ENCODE measurements at regions of chr1 and their contacts with region 1.

Region 1: DNA sequence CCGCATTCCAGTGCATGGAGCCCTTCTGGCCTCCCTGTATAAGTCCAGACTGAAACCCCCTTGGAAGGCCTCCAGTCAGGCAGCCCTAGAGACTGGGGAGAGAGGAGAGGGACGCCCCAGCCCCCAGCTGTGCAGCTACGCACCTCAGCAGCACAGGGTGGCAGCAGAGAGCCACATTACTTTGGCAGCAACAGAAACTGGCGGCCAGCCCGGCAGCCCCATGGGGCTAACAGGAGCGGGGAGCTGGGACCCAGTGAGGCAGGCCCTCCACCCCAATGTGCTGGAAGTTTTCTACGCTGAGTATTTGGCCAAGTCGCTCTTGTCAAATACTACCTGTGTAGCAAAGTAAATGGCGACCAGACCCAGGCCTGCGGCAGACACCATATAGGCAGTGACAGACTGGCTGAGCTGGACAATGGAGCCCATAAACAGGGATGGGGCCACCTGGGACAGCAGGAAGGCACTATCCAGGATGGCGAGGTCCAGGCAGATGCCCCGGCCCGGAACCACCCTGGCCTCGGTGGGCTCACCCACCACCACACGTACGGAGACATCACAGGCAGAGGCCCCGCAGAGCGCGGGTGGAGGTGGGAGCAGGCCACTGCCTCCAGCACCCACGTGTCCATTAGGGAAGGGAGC is 21.2 kb downstream of the SLC45A3 start:
- DNase-seq: peak; percentile 85
- H3K4me3 Mint-ChIP-seq: no peak overlapping the region
- H3K27ac Mint-ChIP-seq: no peak overlapping the region
- H3K4me1 Mint-ChIP-seq: no peaks in the 10 kb centered on the region
- H3K27me3 Mint-ChIP-seq: peaks cover 2% of the 10 kb centered on the region

Region 2: GRCh38 chr1:205485338-205486228 is 173.5 kb before region 1 on chr1:
- CTCF ChIA-PET with region 1: interaction called, 23 read pairs
- POLR2A ChIA-PET with region 1: no interaction called
- intact Hi-C with region 1: no loop called
- DNase-seq: peak; percentile 75
- H3K4me3 Mint-ChIP-seq: peak overlapping the region; percentile 25
- H3K27ac Mint-ChIP-seq: no peak overlapping the region
- H3K4me1 Mint-ChIP-seq: peaks cover 10% of the 10 kb centered on the region
- H3K27me3 Mint-ChIP-seq: peaks cover 22% of the 10 kb centered on the region

Region 3: GRCh38 chr1:205584732-205585131 is 74.3 kb before region 1 on chr1:
- CTCF ChIA-PET with region 1: interaction called, 631 read pairs
- POLR2A ChIA-PET with region 1: no interaction called
- intact Hi-C with region 1: no loop called
- DNase-seq: no peak
- H3K4me3 Mint-ChIP-seq: no peak overlapping the region
- H3K27ac Mint-ChIP-seq: no peak overlapping the region
- H3K4me1 Mint-ChIP-seq: no peaks in the 10 kb centered on the region
- H3K27me3 Mint-ChIP-seq: peaks cover 4% of the 10 kb centered on the region

Region 4: DNA sequence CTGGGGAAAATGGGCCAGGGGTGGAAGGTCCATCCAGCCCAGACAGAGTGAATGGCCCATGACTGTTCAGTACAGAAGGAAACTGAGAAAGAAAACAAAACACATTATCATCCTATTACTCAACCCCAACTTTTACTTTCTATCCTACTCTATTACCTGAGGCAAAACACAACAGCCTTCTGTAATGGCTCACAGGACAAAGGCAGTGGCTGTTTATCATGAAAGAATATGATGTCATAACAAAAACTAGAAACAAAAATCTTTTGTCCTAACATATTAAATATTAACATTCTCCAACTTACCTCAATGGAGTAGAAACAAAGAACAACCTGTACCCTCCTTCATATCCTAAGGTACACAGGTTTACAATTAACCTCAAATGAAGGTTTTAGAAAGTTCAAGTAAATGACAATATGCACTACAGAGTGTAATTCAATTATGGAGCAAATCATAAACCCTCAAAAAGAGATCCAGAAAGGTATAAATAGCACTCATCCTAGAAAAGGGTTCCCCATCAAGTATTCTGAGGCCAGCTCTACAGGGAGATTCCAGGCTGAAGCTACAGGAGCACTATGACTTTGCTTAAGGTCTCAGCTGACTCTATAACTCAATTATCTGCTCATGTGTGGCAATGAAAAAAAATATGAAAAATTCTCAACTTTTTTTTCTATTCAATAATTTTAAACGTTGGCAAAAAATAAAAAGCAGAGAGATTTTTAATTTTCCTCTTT is 42.3 kb before region 1 on chr1:
- CTCF ChIA-PET with region 1: interaction called, 25 read pairs
- POLR2A ChIA-PET with region 1: no interaction called
- intact Hi-C with region 1: no loop called
- DNase-seq: no peak
- H3K4me3 Mint-ChIP-seq: no peak overlapping the region
- H3K27ac Mint-ChIP-seq: peak overlapping the region; percentile 65
- H3K4me1 Mint-ChIP-seq: peaks cover 32% of the 10 kb centered on the region
- H3K27me3 Mint-ChIP-seq: no peaks in the 10 kb centered on the region

Region 5: GRCh38 chr1:205689479-205689878 is 30.4 kb after region 1 on chr1:
- CTCF ChIA-PET with region 1: interaction called, 18 read pairs
- POLR2A ChIA-PET with region 1: no interaction called
- intact Hi-C with region 1: no loop called
- DNase-seq: no peak
- H3K4me3 Mint-ChIP-seq: no peak overlapping the region
- H3K27ac Mint-ChIP-seq: no peak overlapping the region
- H3K4me1 Mint-ChIP-seq: no peaks in the 10 kb centered on the region
- H3K27me3 Mint-ChIP-seq: peaks cover 7% of the 10 kb centered on the region

Region 6: GRCh38 chr1:205775015-205775716 is 116.1 kb after region 1 on chr1 and contains the start of gene RAB29:
- CTCF ChIA-PET with region 1: interaction called, 16 read pairs
- POLR2A ChIA-PET with region 1: no interaction called
- intact Hi-C with region 1: no loop called
- DNase-seq: peak; percentile 91
- H3K4me3 Mint-ChIP-seq: peak within 1 kb of the TSS; percentile 84
- H3K27ac Mint-ChIP-seq: peak within 1 kb of the TSS; percentile 94
- H3K4me1 Mint-ChIP-seq: peaks cover 52% of the 10 kb centered on the region
- H3K27me3 Mint-ChIP-seq: no peaks in the 10 kb centered on the region
- total RNA-seq, gene RAB29: 31.5 to 31.6 TPM

Region 7: GRCh38 chr1:205977402-205978014 is 318.4 kb after region 1 on chr1:
- CTCF ChIA-PET with region 1: interaction called, 124 read pairs
- POLR2A ChIA-PET with region 1: no interaction called
- intact Hi-C with region 1: loop called (anchors 1 kb)
- DNase-seq: peak; percentile 82
- H3K4me3 Mint-ChIP-seq: no peak overlapping the region
- H3K27ac Mint-ChIP-seq: no peak overlapping the region
- H3K4me1 Mint-ChIP-seq: no peaks in the 10 kb centered on the region
- H3K27me3 Mint-ChIP-seq: peaks cover 2% of the 10 kb centered on the region

Measured in activated CD4-positive, alpha-beta memory T cell treated with anti-CD3 and anti-CD28 coated beads for 36 hours (primary cell).